ENCODE measurements at regions of chr5 and their contacts with region 1.

Region 1: GRCh38 chr5:108345541-108346171 is 36.2 kb downstream of the FBXL17 start:
- DNase-seq: peak; percentile 60
- H3K4me3 ChIP-seq: no peak overlapping the region
- H3K27ac ChIP-seq: no peak overlapping the region
- H3K4me1 ChIP-seq: no peaks in the 10 kb centered on the region
- CTCF ChIP-seq: peak; percentile 81

Region 2: DNA sequence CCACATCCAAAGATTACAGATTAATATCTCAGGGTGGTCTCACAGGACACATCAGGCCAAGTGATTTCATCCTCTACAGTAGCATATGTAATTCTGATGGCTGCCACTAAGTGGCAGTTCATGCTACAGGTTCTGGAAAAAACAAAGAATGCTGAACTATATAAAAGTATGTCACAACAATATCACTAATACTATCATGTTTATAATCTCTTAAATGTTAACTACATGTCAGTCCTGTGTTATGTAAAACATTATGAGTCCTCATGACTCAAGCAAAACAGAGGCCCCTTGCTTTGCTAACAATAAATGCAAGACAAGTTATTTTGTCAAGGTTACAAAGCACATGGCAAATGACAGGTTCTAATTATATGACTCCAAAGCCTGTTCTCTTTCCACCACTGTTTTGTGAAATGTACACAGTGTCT is 196.9 kb before region 1 on chr5:
- CTCF ChIA-PET with region 1: no interaction called
- POLR2A ChIA-PET with region 1: no interaction called
- intact Hi-C with region 1: loop called (anchors 10 kb)
- DNase-seq: peak; percentile 11
- H3K4me3 ChIP-seq: no peak overlapping the region
- H3K27ac ChIP-seq: no peak overlapping the region
- H3K4me1 ChIP-seq: no peaks in the 10 kb centered on the region
- CTCF ChIP-seq: peak; percentile 77

Region 3: DNA sequence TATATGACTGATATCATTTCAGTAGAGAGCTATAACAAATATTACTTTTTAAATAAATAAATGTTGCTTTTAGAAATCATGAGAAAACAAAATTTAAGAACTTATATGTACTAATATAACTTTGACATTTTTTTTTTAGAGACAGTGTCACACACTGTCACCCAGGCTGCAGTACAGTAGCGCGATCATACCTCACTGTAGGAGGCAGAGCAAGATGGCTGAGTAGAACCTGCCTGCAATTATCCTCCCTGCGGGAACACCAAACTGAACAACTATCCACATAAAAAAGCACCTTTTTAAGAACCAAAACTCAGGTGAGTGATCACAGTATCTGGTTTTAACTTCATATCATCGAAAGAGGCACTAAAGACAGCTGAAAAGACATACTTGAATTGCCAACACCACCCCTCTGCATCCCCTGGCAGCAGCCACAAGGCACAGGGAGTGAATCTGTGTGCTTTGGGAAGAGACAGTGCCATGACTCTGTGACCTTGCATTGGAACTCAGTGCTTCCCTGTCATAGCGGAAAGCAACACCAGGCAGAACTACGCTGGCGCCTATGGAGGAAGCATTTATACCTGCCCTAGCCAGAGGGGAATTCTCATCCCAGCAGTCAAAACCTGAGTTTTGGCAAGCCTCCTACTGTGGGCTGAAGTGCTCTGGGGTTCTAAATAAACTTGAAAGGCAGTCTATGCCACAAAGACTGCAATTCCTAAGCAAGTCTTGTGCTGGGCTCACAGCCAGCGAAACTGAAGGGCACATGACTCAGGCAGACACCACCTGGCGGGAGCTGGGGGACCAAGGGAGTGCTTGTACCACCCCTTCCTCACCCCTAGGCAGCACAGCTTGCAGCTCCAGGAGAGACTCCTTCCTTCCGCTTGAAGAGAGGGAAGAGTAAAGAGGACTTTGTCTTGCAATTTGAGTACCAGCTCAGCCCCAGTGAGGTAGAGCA is 106.4 kb before region 1 on chr5:
- CTCF ChIA-PET with region 1: no interaction called
- POLR2A ChIA-PET with region 1: no interaction called
- intact Hi-C with region 1: no loop called
- DNase-seq: no peak
- H3K4me3 ChIP-seq: no peak overlapping the region
- H3K27ac ChIP-seq: no peak overlapping the region
- H3K4me1 ChIP-seq: no peaks in the 10 kb centered on the region
- CTCF ChIP-seq: no peak

Region 4: GRCh38 chr5:108260117-108260857 is 85.4 kb before region 1 on chr5:
- CTCF ChIA-PET with region 1: no interaction called
- POLR2A ChIA-PET with region 1: interaction called, 3 read pairs
- intact Hi-C with region 1: loop called (anchors 2 kb)
- DNase-seq: peak; percentile 64
- H3K4me3 ChIP-seq: no peak overlapping the region
- H3K27ac ChIP-seq: no peak overlapping the region
- H3K4me1 ChIP-seq: no peaks in the 10 kb centered on the region
- CTCF ChIP-seq: peak; percentile 99

Measured in OCI-LY7 (cell line).